Transverse colon (tissue), 4 donors: ENCODE measurements at regions of chr17 and their contacts with region 1.

Region 1: DNA sequence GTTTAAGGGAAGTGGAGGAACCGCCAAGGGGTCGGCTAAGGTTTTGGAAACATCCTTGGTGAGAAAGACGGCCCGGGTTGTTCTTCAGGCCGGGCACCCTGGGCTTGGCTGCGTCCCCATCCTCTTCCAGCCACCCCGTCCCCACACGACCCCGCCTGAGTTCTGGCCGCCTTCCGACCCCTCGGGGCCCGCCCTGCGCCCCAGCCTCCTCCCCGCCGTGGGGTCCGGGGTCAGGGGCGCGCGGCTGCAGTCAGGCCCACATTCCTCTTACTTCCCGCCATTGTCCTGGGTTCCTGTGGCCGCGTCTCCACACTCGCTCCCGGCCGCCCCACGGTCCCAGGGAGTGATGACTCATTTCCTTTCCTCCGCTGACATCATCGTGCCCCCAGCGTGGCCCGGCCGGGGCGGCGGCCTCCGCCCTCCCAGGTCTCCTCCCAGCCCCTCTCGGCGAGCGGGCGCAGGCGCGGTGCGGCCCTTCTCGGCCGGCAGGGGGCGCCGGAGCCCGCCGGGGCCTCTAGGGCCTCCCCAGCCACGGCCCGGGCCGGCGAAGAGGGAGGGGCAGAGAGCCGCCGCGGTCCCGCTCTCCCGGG is 59.6 kb downstream of the WSB1 start:
- DNase-seq: peak; percentile 93
- H3K4me3 ChIP-seq: peak overlapping the region; percentile 65 to 84 (median 80)
- H3K27ac ChIP-seq: peak overlapping the region; percentile 92 to 96 (median 94)
- H3K4me1 ChIP-seq: peaks cover 0 to 21% (median 12%) of the 10 kb centered on the region in 4 donors
- H3K27me3 ChIP-seq: no peaks in the 10 kb centered on the region
- CTCF ChIP-seq: peak; percentile 48 to 98 (median 87)
- EP300 ChIP-seq: peak; percentile 41
- POLR2A ChIP-seq: peak; percentile 88

Region 2: DNA sequence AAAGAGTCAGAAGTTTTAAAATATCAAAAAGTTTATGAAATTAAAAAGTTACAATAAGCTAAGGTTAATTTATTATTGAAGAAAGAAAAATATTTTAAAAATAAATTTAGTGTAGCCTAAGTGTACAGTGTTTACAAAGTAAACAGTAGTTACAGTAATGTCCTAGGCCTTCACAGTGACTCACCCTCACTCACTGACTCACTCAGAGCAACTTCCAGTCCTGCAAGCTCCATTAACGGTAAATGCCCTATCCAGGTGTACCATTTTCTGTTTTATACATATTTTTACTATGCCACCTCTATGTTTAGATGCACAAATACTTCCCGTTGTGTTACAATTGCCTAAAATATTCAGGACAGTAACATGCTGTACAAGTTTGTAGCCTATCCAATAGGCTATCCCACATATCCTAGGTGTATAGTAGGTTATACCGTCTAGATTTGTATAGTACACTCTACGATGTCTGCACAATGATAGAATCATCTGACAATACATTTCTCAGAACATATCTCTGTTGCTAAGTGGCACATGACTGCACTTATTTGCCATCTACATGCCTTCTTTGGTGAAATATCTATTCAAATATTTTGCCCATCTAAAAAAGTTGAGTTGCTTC is 126.8 kb before region 1 on chr17:
- in situ Hi-C with region 1: no loop called
- intact Hi-C with region 1: no loop called
- DNase-seq: no peak
- H3K4me3 ChIP-seq: no peak overlapping the region
- H3K27ac ChIP-seq: no peak overlapping the region
- H3K4me1 ChIP-seq: no peaks in the 10 kb centered on the region
- H3K27me3 ChIP-seq: no peaks in the 10 kb centered on the region
- CTCF ChIP-seq: no peak
- EP300 ChIP-seq: no peak
- POLR2A ChIP-seq: no peak

Region 3: DNA sequence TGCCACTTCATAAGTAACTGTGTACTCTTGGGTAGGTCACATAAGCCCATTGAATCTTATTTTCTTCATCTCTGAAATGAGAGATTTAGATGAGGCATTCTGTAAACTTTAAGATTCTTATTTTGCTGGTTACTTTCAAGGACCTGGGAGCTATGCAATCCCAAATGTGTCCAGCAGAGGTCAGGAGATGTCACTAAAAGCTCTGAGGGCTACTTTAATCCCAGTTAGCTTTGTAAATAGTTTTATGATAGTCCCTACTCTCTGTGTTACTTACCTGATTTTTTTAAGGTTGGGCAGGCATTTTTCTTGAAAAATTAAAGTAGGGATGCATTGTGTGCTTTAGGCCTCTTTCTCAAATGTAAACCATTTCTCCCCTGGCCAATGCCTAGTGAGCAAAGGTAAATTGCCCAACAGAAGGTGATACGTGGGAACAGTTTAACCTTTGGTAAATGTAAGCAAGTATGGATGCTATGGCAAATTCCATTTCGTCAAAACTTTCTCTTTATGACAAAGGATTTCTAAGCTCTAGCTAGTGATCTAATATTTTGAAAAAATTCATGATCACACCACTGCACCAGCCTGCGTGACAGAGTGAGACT is 116.7 kb before region 1 on chr17:
- in situ Hi-C with region 1: no loop called
- intact Hi-C with region 1: loop called (anchors 5 kb)
- DNase-seq: peak; percentile 89
- H3K4me3 ChIP-seq: no peak overlapping the region
- H3K27ac ChIP-seq: no peak overlapping the region
- H3K4me1 ChIP-seq: peaks cover 0 to 17% (median 3%) of the 10 kb centered on the region in 4 donors
- H3K27me3 ChIP-seq: no peaks in the 10 kb centered on the region
- CTCF ChIP-seq: peak; percentile 91 to 94 (median 93)
- EP300 ChIP-seq: no peak
- POLR2A ChIP-seq: no peak

Region 4: GRCh38 chr17:27332485-27333409 is 20.8 kb before region 1 on chr17:
- in situ Hi-C with region 1: no loop called
- intact Hi-C with region 1: no loop called
- DNase-seq: peak; percentile 98
- H3K4me3 ChIP-seq: peak overlapping the region in 3 of 4 donors; percentile 44 to 67 (median 46)
- H3K27ac ChIP-seq: peak overlapping the region; percentile 88 to 95 (median 90)
- H3K4me1 ChIP-seq: peaks cover 5 to 18% (median 16%) of the 10 kb centered on the region in 4 donors
- H3K27me3 ChIP-seq: no peaks in the 10 kb centered on the region
- CTCF ChIP-seq: peak; percentile 77 to 97 (median 86)
- EP300 ChIP-seq: peak; percentile 33
- POLR2A ChIP-seq: no peak

Region 5: DNA sequence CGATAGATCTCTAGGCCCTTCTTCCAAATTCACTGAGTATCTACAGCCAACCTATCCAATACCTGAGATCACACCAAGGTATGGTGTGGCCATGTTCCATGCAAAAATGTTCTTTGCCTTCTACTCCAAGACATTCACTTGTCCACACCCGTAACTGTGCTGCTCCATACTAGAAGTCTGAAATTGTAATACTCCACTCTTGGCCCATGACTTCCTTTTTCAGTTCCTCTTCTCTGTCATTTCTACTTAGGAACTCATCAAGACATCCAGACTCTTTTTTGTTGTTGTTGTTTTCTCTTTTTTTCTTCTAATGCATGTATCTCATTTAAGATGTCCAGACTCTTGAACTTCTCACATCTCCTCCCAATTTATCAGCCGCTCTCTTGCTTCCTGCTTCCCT is 60.2 kb after region 1 on chr17:
- in situ Hi-C with region 1: loop called in 1 of 4 experiments (anchors 10 kb)
- intact Hi-C with region 1: no loop called
- DNase-seq: no peak
- H3K4me3 ChIP-seq: no peak overlapping the region
- H3K27ac ChIP-seq: no peak overlapping the region
- H3K4me1 ChIP-seq: peaks cover 0 to 2% (median under 1%) of the 10 kb centered on the region in 4 donors
- H3K27me3 ChIP-seq: no peaks in the 10 kb centered on the region
- CTCF ChIP-seq: no peak
- EP300 ChIP-seq: no peak
- POLR2A ChIP-seq: no peak

Region 6: DNA sequence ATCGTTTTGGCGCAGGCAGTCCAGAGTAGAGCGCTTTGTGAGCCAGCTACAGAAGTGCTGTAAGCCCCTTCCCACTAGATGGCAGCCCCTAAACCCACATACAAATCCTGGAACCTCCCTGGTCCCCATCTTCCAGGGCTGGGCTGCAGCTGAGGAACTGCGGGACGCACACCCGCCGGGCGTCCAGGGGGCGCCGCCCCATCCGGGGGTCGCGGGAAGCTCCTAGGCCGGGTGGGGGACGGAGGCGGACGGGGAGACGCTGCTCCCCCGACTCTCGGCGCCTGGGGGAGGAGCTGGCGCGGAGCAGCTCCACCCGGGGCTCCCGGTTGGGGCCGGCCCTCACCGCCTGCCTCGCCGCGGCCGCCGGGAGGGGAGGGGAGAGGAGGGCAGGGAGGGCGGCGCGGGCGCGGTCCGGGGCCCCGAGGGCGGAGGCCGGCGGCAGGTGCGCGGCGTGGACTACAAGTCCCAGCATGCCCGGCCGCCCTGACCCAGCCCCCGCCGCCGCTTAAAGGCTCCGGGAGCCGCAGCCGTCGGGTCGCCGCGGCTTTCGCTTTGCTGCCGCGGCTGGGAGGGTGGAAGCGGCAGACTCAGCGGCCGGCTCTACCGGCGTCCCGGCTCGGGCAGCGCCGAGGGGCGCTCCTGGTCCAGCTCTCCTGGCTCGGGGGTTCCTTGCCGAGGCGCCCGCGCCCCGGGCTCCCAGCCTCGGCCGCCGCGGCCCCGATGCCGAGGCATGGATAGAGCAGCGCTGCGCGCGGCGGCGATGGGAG is 102.5 kb after region 1 on chr17 and contains the start of gene KSR1:
- in situ Hi-C with region 1: loop called in 1 of 4 experiments (anchors 25 kb)
- intact Hi-C with region 1: loop called (anchors 10 kb)
- DNase-seq: peak; percentile 89
- H3K4me3 ChIP-seq: peak within 1 kb of the TSS; percentile 78 to 88 (median 84)
- H3K27ac ChIP-seq: peak within 1 kb of the TSS; percentile 77 to 89 (median 84)
- H3K4me1 ChIP-seq: peaks cover 6 to 28% (median 19%) of the 10 kb centered on the region in 4 donors
- H3K27me3 ChIP-seq: peaks cover 11% of the 10 kb centered on the region
- CTCF ChIP-seq: peak in 2 of 5 experiments; percentile 18
- EP300 ChIP-seq: no peak
- POLR2A ChIP-seq: peak; percentile 41
- total RNA-seq, gene KSR1: 8.2 to 55.7 (median 30.9) TPM

Region 7: DNA sequence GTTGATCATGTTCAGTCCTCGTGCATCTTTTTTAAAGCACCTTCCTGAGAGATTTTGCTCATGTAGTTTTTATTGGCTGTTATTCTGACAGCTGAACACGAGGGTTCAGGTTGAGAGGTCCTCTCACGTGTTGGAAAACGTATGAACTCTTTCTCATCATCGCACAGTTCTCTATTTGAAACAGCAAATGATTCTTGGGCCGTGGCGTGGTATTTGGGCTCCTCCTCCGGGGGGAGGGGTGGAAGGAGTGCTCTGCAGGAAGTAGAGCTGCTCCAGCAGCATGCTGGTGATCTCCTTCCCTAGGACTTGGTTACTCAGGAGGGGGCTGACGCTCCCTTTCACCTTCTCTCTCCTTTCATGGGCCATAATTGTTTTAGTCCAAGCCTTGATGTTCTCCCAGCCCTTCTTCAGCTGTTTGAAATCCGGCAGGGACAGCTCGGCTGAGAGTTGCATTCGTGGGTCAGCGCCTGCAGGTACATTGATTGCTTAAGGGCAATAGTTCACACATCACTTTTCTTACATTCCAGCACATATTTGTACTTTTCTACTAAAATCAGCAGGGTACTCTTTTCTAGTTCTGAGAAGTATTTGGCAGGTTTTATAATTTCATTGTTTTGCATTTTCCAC is 173.2 kb after region 1 on chr17:
- in situ Hi-C with region 1: loop called in 1 of 4 experiments (anchors 25 kb)
- intact Hi-C with region 1: no loop called
- DNase-seq: peak; percentile 44
- H3K4me3 ChIP-seq: no peak overlapping the region
- H3K27ac ChIP-seq: no peak overlapping the region
- H3K4me1 ChIP-seq: peaks cover 6 to 37% (median 8%) of the 10 kb centered on the region in 4 donors
- H3K27me3 ChIP-seq: no peaks in the 10 kb centered on the region
- CTCF ChIP-seq: no peak
- EP300 ChIP-seq: no peak
- POLR2A ChIP-seq: no peak

Region 8: DNA sequence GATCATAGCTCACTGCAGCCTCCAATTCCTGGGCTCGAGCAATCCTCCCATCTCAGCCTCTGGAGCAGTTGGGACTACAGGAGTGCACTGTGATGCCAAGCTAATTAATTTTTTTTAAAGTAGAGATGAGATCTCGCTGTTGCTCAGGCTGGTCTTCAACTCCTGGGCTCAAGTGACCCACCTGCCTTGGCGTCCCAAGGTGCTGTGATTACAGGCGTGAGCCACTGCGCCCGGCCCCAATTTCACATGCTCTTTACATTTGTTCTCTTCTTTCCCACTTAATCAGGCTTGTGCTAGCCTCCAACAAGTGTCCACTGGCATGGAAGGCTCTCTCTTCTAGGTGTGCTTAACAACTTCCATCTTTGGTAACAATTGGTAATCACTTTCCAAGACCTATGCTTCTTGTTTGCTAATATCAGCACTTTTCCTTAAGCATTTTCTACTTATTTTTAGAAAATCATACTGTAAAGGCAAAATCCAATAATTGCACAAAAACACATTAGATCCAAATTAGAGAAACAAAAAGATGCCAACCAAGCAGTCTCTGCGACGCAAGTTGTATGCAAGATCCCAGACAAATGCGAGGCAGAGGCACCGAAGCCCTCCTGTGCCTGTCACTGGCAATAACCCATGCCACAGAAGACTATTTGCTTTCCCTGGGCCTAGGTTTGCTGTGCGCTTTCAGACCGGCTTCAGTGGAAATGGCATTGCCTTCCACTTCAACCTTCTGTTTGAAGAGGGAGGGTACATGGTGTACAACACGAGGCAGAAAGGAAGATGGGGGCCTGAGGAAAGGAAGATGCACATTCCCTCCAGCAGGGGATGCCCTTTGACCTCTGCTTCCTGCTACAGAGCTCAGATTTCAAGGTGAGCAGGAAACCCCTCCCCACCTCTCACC is 394.2 kb after region 1 on chr17:
- in situ Hi-C with region 1: loop called in 2 of 4 experiments (anchors 25 kb)
- intact Hi-C with region 1: no loop called
- DNase-seq: no peak
- H3K4me3 ChIP-seq: no peak overlapping the region
- H3K27ac ChIP-seq: no peak overlapping the region
- H3K4me1 ChIP-seq: no peaks in the 10 kb centered on the region
- H3K27me3 ChIP-seq: no peaks in the 10 kb centered on the region
- CTCF ChIP-seq: peak in 3 of 5 experiments; percentile 12 to 33 (median 15)
- EP300 ChIP-seq: no peak
- POLR2A ChIP-seq: no peak

Region 9: DNA sequence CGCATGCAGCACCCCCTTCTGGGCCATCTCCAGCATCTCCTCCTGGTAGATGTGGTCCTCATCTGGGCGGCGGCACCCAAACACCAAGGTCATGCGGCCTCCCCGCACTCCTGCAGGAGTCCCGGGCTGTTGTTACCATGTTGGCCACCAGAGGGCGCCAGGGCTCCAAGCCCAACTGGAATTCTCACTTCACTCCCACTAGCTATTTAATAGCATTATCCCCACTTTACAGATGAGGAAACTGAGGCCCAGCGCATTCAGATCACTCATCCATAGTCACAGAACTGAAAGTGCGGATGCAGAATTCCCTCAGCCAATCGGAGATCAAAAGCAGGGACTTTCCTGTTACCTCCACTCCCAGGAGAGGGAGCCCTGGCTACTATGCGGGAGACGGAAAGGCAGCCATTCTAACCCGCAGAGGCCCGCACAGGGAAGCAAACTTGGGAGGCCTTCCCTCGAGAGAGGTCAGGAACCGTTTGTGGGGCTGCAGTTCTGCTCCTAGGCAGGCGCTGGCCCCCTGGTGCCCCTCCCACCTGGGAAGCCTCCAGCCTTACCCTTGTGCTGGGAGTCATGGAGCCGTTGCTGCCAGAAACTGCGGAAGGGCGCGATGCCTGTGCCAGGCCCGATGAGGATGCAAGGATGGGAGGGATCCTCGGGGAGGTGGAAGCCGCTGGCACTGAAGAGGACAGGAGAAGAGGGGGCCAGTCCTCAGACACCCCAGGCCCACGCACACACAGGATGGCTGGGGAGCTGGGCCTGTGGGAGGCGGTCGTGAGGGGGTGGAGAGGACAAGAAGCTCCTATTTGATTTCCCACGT is 406.7 kb after region 1 on chr17:
- in situ Hi-C with region 1: loop called in 1 of 4 experiments (anchors 25 kb)
- intact Hi-C with region 1: no loop called
- DNase-seq: peak; percentile 69
- H3K4me3 ChIP-seq: no peak overlapping the region
- H3K27ac ChIP-seq: no peak overlapping the region
- H3K4me1 ChIP-seq: no peaks in the 10 kb centered on the region
- H3K27me3 ChIP-seq: no peaks in the 10 kb centered on the region
- CTCF ChIP-seq: peak; percentile 83 to 94 (median 90)
- EP300 ChIP-seq: no peak
- POLR2A ChIP-seq: no peak